H1 (cell line): ENCODE measurements at regions of chr14 and their contacts with region 1.

Region 1: GRCh38 chr14:65927931-65928356 is 515.4 kb downstream of the FUT8 start:
- DNase-seq: no peak
- H3K4me3 ChIP-seq: no peak overlapping the region
- H3K27ac ChIP-seq: no peak overlapping the region
- H3K4me1 ChIP-seq: peaks cover 3 to 13% (median 9%) of the 10 kb centered on the region in 4 experiments; a peak in 4 of 7 replicates
- H3K27me3 ChIP-seq: no peaks in the 10 kb centered on the region; a peak in 1 of 7 replicates
- CTCF ChIP-seq: no peak
- EP300 ChIP-seq: no peak
- POLR2A ChIP-seq: no peak
- RAD21 ChIP-seq: no peak

Region 2: GRCh38 chr14:65940056-65940733 is 12.3 kb after region 1 on chr14:
- CTCF ChIA-PET with region 1: interaction called, 12 read pairs
- POLR2A ChIA-PET with region 1: interaction called, 5 read pairs
- DNase-seq: no peak
- H3K4me3 ChIP-seq: no peak overlapping the region
- H3K27ac ChIP-seq: no peak overlapping the region
- H3K4me1 ChIP-seq: peaks cover 0 to 14% (median 5%) of the 10 kb centered on the region in 4 experiments; a peak in 5 of 7 replicates
- H3K27me3 ChIP-seq: no peaks in the 10 kb centered on the region
- CTCF ChIP-seq: no peak
- EP300 ChIP-seq: no peak
- POLR2A ChIP-seq: no peak
- RAD21 ChIP-seq: no peak

Region 3: GRCh38 chr14:65976761-65977404 is 48.9 kb after region 1 on chr14:
- CTCF ChIA-PET with region 1: no interaction called
- POLR2A ChIA-PET with region 1: no interaction called
- DNase-seq: no peak
- H3K4me3 ChIP-seq: no peak overlapping the region
- H3K27ac ChIP-seq: no peak overlapping the region
- H3K4me1 ChIP-seq: peaks cover 0 to 3% (median 0%) of the 10 kb centered on the region in 4 experiments; a peak in 1 of 7 replicates
- H3K27me3 ChIP-seq: no peaks in the 10 kb centered on the region
- CTCF ChIP-seq: no peak
- EP300 ChIP-seq: no peak
- POLR2A ChIP-seq: no peak
- RAD21 ChIP-seq: no peak